ENCODE measurements at regions of chr12 and their contacts with region 1.

Region 1: GRCh38 chr12:121802846-121803630 is 771 bp upstream of the SETD1B start:
- DNase-seq: peak; percentile 89
- ATAC-seq: peak; percentile 35
- H3K4me3 ChIP-seq: peak overlapping the region; percentile 74
- H3K27ac ChIP-seq: peak overlapping the region; percentile 100
- H3K4me1 ChIP-seq: peaks cover 34 to 64% of the 10 kb centered on the region in 2 experiments
- H3K27me3 ChIP-seq: no peaks in the 10 kb centered on the region
- CTCF ChIP-seq: no peak
- POLR2A ChIP-seq: peak; percentile 90
- RAD21 ChIP-seq: no peak

Region 2: DNA sequence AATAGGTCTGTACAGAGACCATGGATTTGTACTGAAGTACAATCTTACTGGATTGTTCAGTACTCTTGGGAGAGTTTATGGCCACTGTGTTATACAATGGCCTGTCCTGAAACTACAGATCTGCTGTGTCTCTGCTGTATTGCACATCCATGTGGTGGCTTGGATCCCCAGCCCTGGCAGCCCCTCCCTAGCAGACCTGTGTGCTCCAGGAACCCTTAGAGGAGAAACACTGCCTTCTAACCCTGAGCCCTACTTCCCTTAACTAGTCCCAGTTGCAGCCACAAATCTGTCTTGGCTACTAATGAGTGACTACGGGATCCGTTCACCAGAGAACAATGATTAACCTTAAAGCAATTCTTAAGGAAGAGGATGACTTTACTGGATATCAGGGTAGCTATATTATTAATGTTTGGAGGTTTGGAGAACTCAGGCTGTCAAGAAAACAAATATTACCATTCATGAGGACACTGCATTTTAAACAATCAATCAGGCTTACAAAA is 375.4 kb before region 1 on chr12:
- CTCF ChIA-PET with region 1: no interaction called
- POLR2A ChIA-PET with region 1: no interaction called
- RAD21 ChIA-PET with region 1: no interaction called
- intact Hi-C with region 1: no loop called
- DNase-seq: no peak
- ATAC-seq: no peak
- H3K4me3 ChIP-seq: no peak overlapping the region
- H3K27ac ChIP-seq: no peak overlapping the region
- H3K4me1 ChIP-seq: no peaks in the 10 kb centered on the region
- H3K27me3 ChIP-seq: no peaks in the 10 kb centered on the region
- CTCF ChIP-seq: no peak
- POLR2A ChIP-seq: no peak
- RAD21 ChIP-seq: no peak

Region 3: GRCh38 chr12:121773011-121773777 is 29.8 kb before region 1 on chr12:
- CTCF ChIA-PET with region 1: no interaction called
- POLR2A ChIA-PET with region 1: no interaction called
- RAD21 ChIA-PET with region 1: no interaction called
- intact Hi-C with region 1: no loop called
- DNase-seq: peak; percentile 64
- ATAC-seq: peak; percentile 81
- H3K4me3 ChIP-seq: no peak overlapping the region
- H3K27ac ChIP-seq: peak overlapping the region; percentile 49
- H3K4me1 ChIP-seq: peaks cover 20 to 49% of the 10 kb centered on the region in 2 experiments
- H3K27me3 ChIP-seq: no peaks in the 10 kb centered on the region
- CTCF ChIP-seq: peak; percentile 88 to 95 (median 90)
- POLR2A ChIP-seq: no peak
- RAD21 ChIP-seq: peak; percentile 99

Region 4: GRCh38 chr12:121819212-121819949 is 16.3 kb after region 1 on chr12:
- CTCF ChIA-PET with region 1: no interaction called
- POLR2A ChIA-PET with region 1: no interaction called
- RAD21 ChIA-PET with region 1: no interaction called
- intact Hi-C with region 1: no loop called
- DNase-seq: no peak
- ATAC-seq: no peak
- H3K4me3 ChIP-seq: no peak overlapping the region
- H3K27ac ChIP-seq: no peak overlapping the region
- H3K4me1 ChIP-seq: no peaks in the 10 kb centered on the region
- H3K27me3 ChIP-seq: no peaks in the 10 kb centered on the region
- CTCF ChIP-seq: no peak
- POLR2A ChIP-seq: no peak
- RAD21 ChIP-seq: no peak

Region 5: GRCh38 chr12:121839106-121839992 is 36.3 kb after region 1 on chr12:
- CTCF ChIA-PET with region 1: no interaction called
- POLR2A ChIA-PET with region 1: interaction called, 4 read pairs
- RAD21 ChIA-PET with region 1: no interaction called
- intact Hi-C with region 1: loop called (anchors 1 kb)
- DNase-seq: peak; percentile 95
- ATAC-seq: peak; percentile 93
- H3K4me3 ChIP-seq: peak overlapping the region; percentile 55 to 94
- H3K27ac ChIP-seq: peak overlapping the region; percentile 66
- H3K4me1 ChIP-seq: peaks cover 4 to 44% of the 10 kb centered on the region in 2 experiments; a peak in 3 of 4 replicates
- H3K27me3 ChIP-seq: no peaks in the 10 kb centered on the region
- CTCF ChIP-seq: peak in 1 of 3 experiments; percentile 45; a peak in 2 of 6 replicates
- POLR2A ChIP-seq: peak; percentile 81
- RAD21 ChIP-seq: no peak